Ascending aorta (tissue), 2 donors: ENCODE measurements at regions of chr7 and their contacts with region 1.

Region 1: DNA sequence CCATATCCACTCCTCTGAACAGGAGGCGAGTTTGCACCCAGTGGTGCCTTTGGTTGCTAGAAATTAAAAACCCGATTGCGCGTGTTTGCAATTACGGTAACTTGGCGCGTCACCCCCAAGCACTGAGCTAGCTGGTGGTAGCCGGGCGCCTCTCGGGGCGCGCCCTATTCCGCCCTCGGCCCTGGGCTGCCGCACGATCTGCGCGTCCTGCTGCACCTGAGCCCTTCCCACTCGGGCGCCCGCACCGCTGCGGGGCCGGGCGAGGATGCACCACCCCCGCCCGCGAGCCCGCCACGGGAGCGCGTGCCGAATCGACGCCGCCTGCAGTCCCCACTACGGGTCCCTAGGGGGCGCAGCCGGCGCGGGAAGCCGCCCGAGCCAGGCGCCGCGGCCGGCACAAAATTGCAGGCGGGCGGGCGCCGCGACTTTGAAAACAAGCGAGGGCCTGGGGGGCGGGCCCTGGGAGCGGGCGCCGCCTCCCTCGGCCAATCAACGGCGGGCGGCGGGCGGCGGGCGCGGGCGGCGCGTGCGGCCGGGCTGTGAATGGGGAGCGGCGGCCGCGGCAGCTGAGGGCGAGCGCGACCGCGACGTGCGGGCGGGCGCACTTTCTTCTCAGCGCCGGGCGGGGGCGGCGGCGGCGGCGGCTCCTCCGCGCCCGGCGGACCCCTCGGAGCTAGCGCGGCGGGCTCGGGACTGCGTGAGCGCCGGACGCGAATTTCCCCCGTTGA is at the start of gene SDK1:
- DNase-seq: peak; percentile 61 to 96
- H3K4me3 ChIP-seq: peak within 1 kb of the TSS; percentile 73 to 78
- H3K27ac ChIP-seq: peak within 1 kb of the TSS; percentile 64 to 79
- H3K4me1 ChIP-seq: peaks cover 0 to 9% of the 10 kb centered on the region in 2 donors
- H3K27me3 ChIP-seq: no peaks in the 10 kb centered on the region
- CTCF ChIP-seq: peak; percentile 68 to 99 (median 87)
- total RNA-seq, gene SDK1: 13.3 TPM

Region 2: GRCh38 chr7:3065724-3066143 is 235.1 kb before region 1 on chr7:
- intact Hi-C with region 1: loop called (anchors 5 kb)
- DNase-seq: no peak
- H3K4me3 ChIP-seq: no peak overlapping the region
- H3K27ac ChIP-seq: no peak overlapping the region
- H3K4me1 ChIP-seq: peaks cover 0 to 8% of the 10 kb centered on the region in 2 donors
- H3K27me3 ChIP-seq: no peaks in the 10 kb centered on the region
- CTCF ChIP-seq: peak in 2 of 3 experiments; percentile 32 to 49

Region 3: DNA sequence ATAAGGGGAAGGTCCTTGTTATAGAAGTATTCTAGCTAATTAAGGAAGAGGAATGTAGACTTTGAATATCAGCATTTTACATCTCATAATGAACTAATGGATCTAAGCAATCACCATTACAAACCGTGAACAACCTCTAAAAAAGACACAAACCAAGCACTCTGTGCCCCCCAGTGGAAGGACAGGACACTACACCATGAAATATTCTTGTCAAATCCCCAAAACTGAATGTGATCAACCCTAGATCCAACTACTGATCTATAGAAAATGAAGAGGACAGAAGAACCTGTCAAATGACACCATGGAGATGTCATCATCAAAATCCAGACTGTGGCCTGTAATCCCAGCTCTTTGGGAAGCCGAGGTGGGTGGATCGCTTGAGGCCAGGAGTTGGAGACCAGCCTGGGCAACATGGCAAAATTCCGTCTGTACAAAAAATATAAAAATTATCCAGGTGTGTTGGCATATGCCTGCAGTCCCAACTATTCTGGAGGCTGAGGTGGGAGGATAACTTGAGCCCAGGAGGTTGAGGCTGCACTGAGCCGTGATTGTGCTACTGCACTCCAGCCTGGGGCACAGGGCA is 145.8 kb before region 1 on chr7:
- intact Hi-C with region 1: no loop called
- DNase-seq: no peak
- H3K4me3 ChIP-seq: no peak overlapping the region
- H3K27ac ChIP-seq: no peak overlapping the region
- H3K4me1 ChIP-seq: no peaks in the 10 kb centered on the region
- H3K27me3 ChIP-seq: no peaks in the 10 kb centered on the region
- CTCF ChIP-seq: peak; percentile 39 to 43 (median 42)

Region 4: DNA sequence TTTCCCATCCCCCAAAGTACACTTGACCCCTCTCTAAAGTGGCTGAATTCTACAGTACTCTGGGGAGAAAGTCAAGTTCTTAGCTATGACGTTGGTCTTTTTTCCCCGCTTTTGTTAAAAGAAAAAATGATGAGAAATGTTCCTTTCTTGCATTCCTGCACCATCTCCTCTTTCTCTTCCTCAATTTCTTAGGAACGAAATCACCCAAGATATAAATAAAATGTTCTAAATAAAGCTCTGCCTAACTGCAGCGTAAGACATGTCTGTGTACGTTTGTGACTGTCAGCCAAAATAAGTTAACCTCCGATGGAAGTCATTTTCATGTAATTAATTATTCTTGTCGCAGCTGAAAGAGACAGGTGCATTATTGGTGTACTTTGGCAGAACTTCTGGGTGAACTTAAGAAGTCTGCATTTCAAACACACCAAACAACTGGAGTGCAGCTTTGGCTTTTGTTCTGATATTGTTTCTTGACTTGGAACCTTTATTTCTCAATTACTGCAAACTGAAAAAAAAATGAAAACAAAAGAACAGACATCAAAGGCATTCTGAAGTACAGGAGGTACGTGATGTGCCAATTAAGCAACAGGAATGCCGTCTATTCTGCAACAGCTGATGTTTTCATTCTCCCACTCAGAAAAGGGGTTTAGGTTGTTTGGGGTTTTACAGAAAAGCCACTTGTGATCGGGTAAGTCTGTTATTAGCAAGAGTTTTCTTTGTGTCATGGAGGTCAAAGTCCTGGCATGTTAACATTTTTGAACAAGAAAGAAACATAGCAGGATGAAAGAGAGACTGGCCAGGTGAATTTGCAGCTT is 82.2 kb before region 1 on chr7:
- intact Hi-C with region 1: loop called (anchors 2 kb)
- DNase-seq: no peak
- H3K4me3 ChIP-seq: peak overlapping the region; percentile 11 to 23
- H3K27ac ChIP-seq: peak overlapping the region; percentile 67 to 72
- H3K4me1 ChIP-seq: peaks cover 12 to 42% of the 10 kb centered on the region in 2 donors
- H3K27me3 ChIP-seq: no peaks in the 10 kb centered on the region
- CTCF ChIP-seq: no peak

Region 5: GRCh38 chr7:3232228-3232627 is 68.6 kb before region 1 on chr7:
- intact Hi-C with region 1: loop called (anchors 5 kb)
- DNase-seq: peak; percentile 16 to 87
- H3K4me3 ChIP-seq: no peak overlapping the region
- H3K27ac ChIP-seq: peak overlapping the region; percentile 77 to 83
- H3K4me1 ChIP-seq: peaks cover 10 to 22% of the 10 kb centered on the region in 2 donors
- H3K27me3 ChIP-seq: no peaks in the 10 kb centered on the region
- CTCF ChIP-seq: no peak

Region 6: GRCh38 chr7:3493499-3493898 is 192.7 kb after region 1 on chr7:
- intact Hi-C with region 1: loop called (anchors 5 kb)
- DNase-seq: no peak
- H3K4me3 ChIP-seq: no peak overlapping the region
- H3K27ac ChIP-seq: peak overlapping the region in 1 of 2 donors; percentile 27
- H3K4me1 ChIP-seq: peaks cover 0 to 2% of the 10 kb centered on the region in 2 donors
- H3K27me3 ChIP-seq: no peaks in the 10 kb centered on the region
- CTCF ChIP-seq: no peak

Region 7: GRCh38 chr7:3673524-3673923 is 372.7 kb after region 1 on chr7:
- intact Hi-C with region 1: no loop called
- DNase-seq: no peak
- H3K4me3 ChIP-seq: no peak overlapping the region
- H3K27ac ChIP-seq: no peak overlapping the region
- H3K4me1 ChIP-seq: no peaks in the 10 kb centered on the region
- H3K27me3 ChIP-seq: no peaks in the 10 kb centered on the region
- CTCF ChIP-seq: no peak

Region 8: DNA sequence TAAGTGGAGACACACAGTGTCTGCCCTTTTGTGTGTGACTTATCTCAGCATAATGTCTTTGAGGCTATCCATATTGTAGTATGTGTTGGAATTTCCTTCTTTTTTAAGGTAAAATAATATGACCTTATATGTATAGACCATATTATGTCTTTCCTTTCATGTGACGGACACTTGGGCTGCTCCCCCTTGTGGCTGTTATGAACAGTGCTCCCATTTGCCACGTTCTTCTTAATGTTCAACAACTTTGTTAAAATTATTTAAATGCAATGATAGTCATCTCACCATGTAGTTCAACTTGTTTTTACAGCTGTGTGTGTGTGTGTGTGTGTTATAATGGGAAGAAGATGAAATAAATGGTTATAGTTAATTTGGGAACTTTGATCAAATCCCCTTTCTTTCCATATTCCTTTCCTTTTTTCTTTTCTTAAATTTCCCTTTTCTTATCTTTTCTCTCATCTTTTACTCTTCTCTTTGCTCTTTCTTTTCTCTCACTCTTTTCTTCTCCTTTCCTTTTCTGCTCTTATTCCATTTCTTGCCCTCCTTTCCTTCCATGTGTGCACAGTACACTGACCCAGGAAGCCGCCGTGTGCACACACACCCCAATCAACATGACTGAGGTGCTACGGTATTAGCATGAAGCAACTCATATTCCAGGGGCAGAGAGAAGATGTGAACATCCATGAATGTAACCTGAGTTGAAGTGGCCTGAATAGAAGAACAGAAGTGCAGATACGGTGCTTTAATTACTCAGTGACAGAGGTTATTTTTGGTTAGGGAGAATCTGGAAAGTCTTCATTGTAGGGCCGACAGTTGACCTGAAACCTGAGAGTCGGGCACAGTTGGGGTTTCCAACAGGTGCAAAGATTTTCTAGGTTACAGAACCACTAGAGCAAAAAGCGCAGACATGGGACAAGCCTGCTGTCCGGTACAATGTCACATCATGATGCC is 596.9 kb after region 1 on chr7:
- intact Hi-C with region 1: loop called (anchors 2 kb)
- DNase-seq: no peak
- H3K4me3 ChIP-seq: no peak overlapping the region
- H3K27ac ChIP-seq: no peak overlapping the region
- H3K4me1 ChIP-seq: peaks cover 0 to 3% of the 10 kb centered on the region in 2 donors
- H3K27me3 ChIP-seq: no peaks in the 10 kb centered on the region
- CTCF ChIP-seq: peak; percentile 59 to 69 (median 62)